ENCODE measurements at regions of chr10 and their contacts with region 1.

Region 1: GRCh38 chr10:99560277-99561126 is 27.8 kb downstream of the NKX2-3 start:
- DNase-seq: peak; percentile 55
- ATAC-seq: peak; percentile 92
- H3K4me3 ChIP-seq: no peak overlapping the region
- H3K27ac ChIP-seq: no peak overlapping the region
- H3K4me1 ChIP-seq: no peaks in the 10 kb centered on the region
- H3K27me3 ChIP-seq: peaks cover 1 to 12% of the 10 kb centered on the region in 2 experiments; a peak in 3 of 5 replicates
- CTCF ChIP-seq: peak; percentile 85
- EP300 ChIP-seq: no peak
- POLR2A ChIP-seq: no peak
- RAD21 ChIP-seq: peak; percentile 53; the same call in 1 of the 2 replicates

Region 2: GRCh38 chr10:99582255-99582770 is 21.8 kb after region 1 on chr10:
- CTCF ChIA-PET with region 1: no interaction called
- POLR2A ChIA-PET with region 1: no interaction called
- in situ Hi-C with region 1: no loop called
- intact Hi-C with region 1: no loop called
- DNase-seq: no peak
- ATAC-seq: no peak
- H3K4me3 ChIP-seq: no peak overlapping the region
- H3K27ac ChIP-seq: no peak overlapping the region
- H3K4me1 ChIP-seq: no peaks in the 10 kb centered on the region
- H3K27me3 ChIP-seq: peaks cover 4 to 47% of the 10 kb centered on the region in 2 experiments; a peak in 4 of 5 replicates
- CTCF ChIP-seq: no peak
- EP300 ChIP-seq: no peak
- POLR2A ChIP-seq: no peak
- RAD21 ChIP-seq: no peak

Region 3: GRCh38 chr10:99612167-99612831 is 51.8 kb after region 1 on chr10:
- CTCF ChIA-PET with region 1: interaction called, 28 read pairs
- POLR2A ChIA-PET with region 1: no interaction called
- in situ Hi-C with region 1: loop called (anchors 5 kb)
- intact Hi-C with region 1: loop called (anchors 1 kb)
- DNase-seq: peak; percentile 63
- ATAC-seq: peak; percentile 70
- H3K4me3 ChIP-seq: no peak overlapping the region
- H3K27ac ChIP-seq: no peak overlapping the region
- H3K4me1 ChIP-seq: peaks cover 8% of the 10 kb centered on the region
- H3K27me3 ChIP-seq: no peaks in the 10 kb centered on the region
- CTCF ChIP-seq: peak; percentile 84
- EP300 ChIP-seq: no peak
- POLR2A ChIP-seq: no peak
- RAD21 ChIP-seq: peak; percentile 82

Region 4: GRCh38 chr10:99711129-99711719 is 150.7 kb after region 1 on chr10:
- CTCF ChIA-PET with region 1: interaction called, 4 read pairs
- POLR2A ChIA-PET with region 1: no interaction called
- in situ Hi-C with region 1: no loop called
- intact Hi-C with region 1: loop called (anchors 1 kb)
- DNase-seq: peak; percentile 51
- ATAC-seq: peak; percentile 92
- H3K4me3 ChIP-seq: no peak overlapping the region
- H3K27ac ChIP-seq: no peak overlapping the region
- H3K4me1 ChIP-seq: no peaks in the 10 kb centered on the region
- H3K27me3 ChIP-seq: no peaks in the 10 kb centered on the region
- CTCF ChIP-seq: peak; percentile 78
- EP300 ChIP-seq: no peak
- POLR2A ChIP-seq: no peak
- RAD21 ChIP-seq: no peak

Measured in HepG2 (cell line).